SK-N-SH (cell line): ENCODE measurements at regions of chrX and their contacts with region 1.

Region 1: GRCh38 chrX:153470435-153471363 is at the start of gene HAUS7:
- DNase-seq: peak; percentile 95
- H3K4me3 ChIP-seq: peak within 1 kb of the TSS; percentile 65 to 73
- H3K27ac ChIP-seq: peak within 1 kb of the TSS in 1 of 2 experiments; percentile 24; a peak in 2 of 4 replicates
- H3K4me1 ChIP-seq: peaks cover 0 to 16% of the 10 kb centered on the region in 2 experiments; a peak in 1 of 4 replicates
- H3K27me3 ChIP-seq: no peaks in the 10 kb centered on the region
- CTCF ChIP-seq: peak; percentile 76
- EP300 ChIP-seq: no peak
- RAD21 ChIP-seq: peak; percentile 83
- polyA plus RNA-seq, gene HAUS7: 27.1 and 39.7 TPM in 2 replicates

Region 2: DNA sequence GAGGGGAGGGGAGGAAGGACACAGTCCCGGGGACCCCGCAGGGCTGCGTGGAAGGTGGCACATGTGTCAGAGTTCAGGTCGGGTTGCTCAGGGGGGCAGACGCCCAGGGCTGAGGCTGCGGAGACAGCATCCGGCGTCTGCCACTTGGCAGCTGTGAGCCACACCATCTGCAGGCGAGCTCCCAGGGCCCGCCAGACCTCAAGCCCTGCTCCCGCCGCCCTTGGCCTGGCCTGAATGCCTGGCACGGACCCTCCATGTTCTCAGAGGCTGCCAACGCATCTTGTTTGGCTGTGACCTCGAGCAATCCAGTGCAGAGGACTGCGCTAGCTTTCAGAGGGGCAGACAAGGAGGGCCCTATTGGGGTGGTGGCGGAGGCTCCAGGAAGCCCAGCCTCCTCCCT is 29.2 kb after region 1 on chrX:
- CTCF ChIA-PET with region 1: interaction called, 203 read pairs
- POLR2A ChIA-PET with region 1: no interaction called
- DNase-seq: peak; percentile 80
- H3K4me3 ChIP-seq: no peak overlapping the region
- H3K27ac ChIP-seq: peak overlapping the region in 1 of 2 experiments; percentile 81; a peak in 2 of 4 replicates
- H3K4me1 ChIP-seq: peaks cover 0 to 29% of the 10 kb centered on the region in 2 experiments; a peak in 1 of 4 replicates
- H3K27me3 ChIP-seq: no peaks in the 10 kb centered on the region
- CTCF ChIP-seq: no peak
- EP300 ChIP-seq: no peak
- RAD21 ChIP-seq: no peak

Region 3: GRCh38 chrX:153521034-153521433 is 50.3 kb after region 1 on chrX:
- CTCF ChIA-PET with region 1: interaction called, 10 read pairs
- POLR2A ChIA-PET with region 1: no interaction called
- DNase-seq: peak; percentile 76
- H3K4me3 ChIP-seq: no peak overlapping the region
- H3K27ac ChIP-seq: peak overlapping the region in 1 of 2 experiments; percentile 58; a peak in 2 of 4 replicates
- H3K4me1 ChIP-seq: peaks cover 0 to 44% of the 10 kb centered on the region in 2 experiments; a peak in 3 of 4 replicates
- H3K27me3 ChIP-seq: peaks cover 40% of the 10 kb centered on the region; the same call in 1 of the 2 replicates
- CTCF ChIP-seq: no peak
- EP300 ChIP-seq: no peak
- RAD21 ChIP-seq: no peak

Region 4: GRCh38 chrX:153854702-153855101 is 384.0 kb after region 1 on chrX:
- CTCF ChIA-PET with region 1: no interaction called
- POLR2A ChIA-PET with region 1: no interaction called
- DNase-seq: no peak
- H3K4me3 ChIP-seq: no peak overlapping the region
- H3K27ac ChIP-seq: no peak overlapping the region
- H3K4me1 ChIP-seq: no peaks in the 10 kb centered on the region
- H3K27me3 ChIP-seq: peaks cover 56% of the 10 kb centered on the region
- CTCF ChIP-seq: no peak
- EP300 ChIP-seq: no peak
- RAD21 ChIP-seq: no peak